ENCODE measurements at regions of chr5 and their contacts with region 1.

Region 1: DNA sequence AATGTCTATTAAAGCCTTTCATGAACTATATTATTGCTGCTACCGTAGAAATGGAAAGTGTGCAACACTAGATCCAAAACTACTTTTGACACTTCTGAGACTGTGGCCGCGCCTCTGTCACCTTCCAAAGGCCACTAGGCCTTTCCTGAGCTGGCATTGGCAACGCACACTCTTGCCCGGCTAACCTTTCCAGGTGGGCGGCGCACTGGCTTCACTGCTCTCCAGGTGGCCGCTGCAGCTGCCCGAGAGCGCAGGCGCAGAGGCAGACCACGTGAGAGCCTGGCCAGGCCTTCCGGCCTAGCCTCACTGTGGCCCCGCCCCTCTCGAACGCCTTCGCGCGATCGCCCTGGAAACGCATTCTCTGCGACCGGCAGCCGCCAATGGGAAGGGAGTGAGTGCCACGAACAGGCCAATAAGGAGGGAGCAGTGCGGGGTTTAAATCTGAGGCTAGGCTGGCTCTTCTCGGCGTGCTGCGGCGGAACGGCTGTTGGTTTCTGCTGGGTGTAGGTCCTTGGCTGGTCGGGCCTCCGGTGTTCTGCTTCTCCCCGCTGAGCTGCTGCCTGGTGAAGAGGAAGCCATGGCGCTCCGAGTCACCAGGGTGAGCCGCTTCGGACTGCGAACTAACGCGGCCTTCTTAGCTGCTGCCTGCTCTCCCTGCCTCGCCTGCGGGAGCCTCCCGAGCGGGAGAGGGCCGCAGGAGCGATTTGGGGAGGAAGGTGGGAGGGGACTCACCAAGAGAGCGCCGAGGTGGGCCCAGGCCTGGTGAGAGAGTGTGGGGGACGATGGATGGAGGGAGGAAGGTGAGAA is at the start of gene CCNB1:
- DNase-seq: peak; percentile 98
- ATAC-seq: peak; percentile 100
- total RNA-seq, gene CCNB1: 2.5 TPM

Region 2: GRCh38 chr5:69093771-69094482 is 73.0 kb before region 1 on chr5 and contains the start of gene SLC30A5:
- intact Hi-C with region 1: loop called (anchors 2 kb)
- DNase-seq: peak; percentile 99
- ATAC-seq: peak; percentile 99
- total RNA-seq, gene SLC30A5: 28.9 TPM